HepG2 (cell line): ENCODE measurements at regions of chr1 and their contacts with region 1.

Region 1: GRCh38 chr1:184036517-184036949 is 995 bp downstream of the COLGALT2 start:
- DNase-seq: peak; percentile 42
- ATAC-seq: peak; percentile 85
- H3K4me3 ChIP-seq: peak overlapping the region; percentile 41 to 74 (median 66); a peak in 5 of 6 replicates
- H3K27ac ChIP-seq: no peak overlapping the region
- H3K4me1 ChIP-seq: peaks cover 31% of the 10 kb centered on the region
- H3K27me3 ChIP-seq: peaks cover 1 to 51% of the 10 kb centered on the region in 2 experiments; a peak in 4 of 5 replicates
- CTCF ChIP-seq: no peak
- EP300 ChIP-seq: no peak
- POLR2A ChIP-seq: no peak
- RAD21 ChIP-seq: no peak

Region 2: DNA sequence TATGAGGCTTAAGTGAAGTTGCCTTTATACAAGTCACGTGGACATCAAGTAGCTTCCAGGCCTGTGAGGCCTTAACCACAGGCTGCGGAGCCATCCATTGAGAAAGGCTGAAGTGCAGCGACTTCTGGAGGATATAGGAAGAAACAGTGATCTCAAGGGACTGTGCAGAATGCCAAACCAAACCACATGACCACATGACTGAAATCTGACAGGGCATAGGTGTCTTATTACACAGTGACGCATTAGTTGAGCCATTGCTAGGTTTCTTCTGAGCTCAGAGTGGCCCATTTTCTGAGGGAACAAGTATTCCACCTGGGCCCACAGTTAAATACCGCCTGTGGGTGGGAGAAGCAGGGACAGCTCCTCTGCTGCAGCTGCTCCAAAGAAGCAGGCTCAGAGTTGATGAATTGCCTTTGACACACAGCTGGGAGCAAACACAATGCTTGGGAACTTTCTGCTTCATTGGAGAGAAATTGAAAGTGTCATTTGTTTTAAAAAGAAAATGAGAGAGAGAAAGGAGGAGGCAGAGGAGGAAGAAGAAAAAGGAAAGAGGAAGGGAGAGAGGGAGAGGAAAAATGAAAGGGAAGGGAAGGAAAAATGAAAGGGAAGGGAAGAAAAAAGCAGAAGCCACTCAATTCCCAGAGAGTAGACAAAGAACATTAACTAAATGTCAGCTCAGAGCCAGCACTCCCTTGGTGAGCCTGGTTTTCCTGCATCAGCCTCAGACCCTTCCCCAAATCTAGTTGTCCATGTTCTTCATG is 93.4 kb before region 1 on chr1:
- CTCF ChIA-PET with region 1: no interaction called
- POLR2A ChIA-PET with region 1: no interaction called
- in situ Hi-C with region 1: no loop called
- intact Hi-C with region 1: no loop called
- DNase-seq: no peak
- ATAC-seq: no peak
- H3K4me3 ChIP-seq: no peak overlapping the region
- H3K27ac ChIP-seq: no peak overlapping the region
- H3K4me1 ChIP-seq: peaks cover 15% of the 10 kb centered on the region
- H3K27me3 ChIP-seq: no peaks in the 10 kb centered on the region
- CTCF ChIP-seq: no peak
- EP300 ChIP-seq: no peak
- POLR2A ChIP-seq: no peak
- RAD21 ChIP-seq: no peak

Region 3: GRCh38 chr1:183995322-183996039 is 41.1 kb before region 1 on chr1:
- CTCF ChIA-PET with region 1: no interaction called
- POLR2A ChIA-PET with region 1: interaction called, 3 read pairs
- in situ Hi-C with region 1: no loop called
- intact Hi-C with region 1: loop called (anchors 5 kb)
- DNase-seq: no peak
- ATAC-seq: no peak
- H3K4me3 ChIP-seq: no peak overlapping the region; a peak in 1 of 6 replicates
- H3K27ac ChIP-seq: no peak overlapping the region
- H3K4me1 ChIP-seq: peaks cover 67% of the 10 kb centered on the region
- H3K27me3 ChIP-seq: no peaks in the 10 kb centered on the region
- CTCF ChIP-seq: no peak
- EP300 ChIP-seq: no peak
- POLR2A ChIP-seq: no peak
- RAD21 ChIP-seq: no peak

Region 4: GRCh38 chr1:184101141-184101540 is 64.6 kb after region 1 on chr1:
- CTCF ChIA-PET with region 1: no interaction called
- POLR2A ChIA-PET with region 1: no interaction called
- in situ Hi-C with region 1: no loop called
- intact Hi-C with region 1: no loop called
- DNase-seq: no peak
- ATAC-seq: no peak
- H3K4me3 ChIP-seq: no peak overlapping the region
- H3K27ac ChIP-seq: no peak overlapping the region
- H3K4me1 ChIP-seq: no peaks in the 10 kb centered on the region
- H3K27me3 ChIP-seq: no peaks in the 10 kb centered on the region; a peak in 1 of 5 replicates
- CTCF ChIP-seq: no peak
- EP300 ChIP-seq: no peak
- POLR2A ChIP-seq: no peak
- RAD21 ChIP-seq: no peak

Region 5: GRCh38 chr1:184212649-184213314 is 176.2 kb after region 1 on chr1:
- CTCF ChIA-PET with region 1: no interaction called
- POLR2A ChIA-PET with region 1: no interaction called
- in situ Hi-C with region 1: no loop called
- intact Hi-C with region 1: no loop called
- DNase-seq: no peak
- ATAC-seq: no peak
- H3K4me3 ChIP-seq: no peak overlapping the region
- H3K27ac ChIP-seq: no peak overlapping the region
- H3K4me1 ChIP-seq: no peaks in the 10 kb centered on the region
- H3K27me3 ChIP-seq: peaks cover 0 to 10% of the 10 kb centered on the region in 2 experiments; a peak in 2 of 5 replicates
- CTCF ChIP-seq: no peak
- EP300 ChIP-seq: no peak
- POLR2A ChIP-seq: no peak
- RAD21 ChIP-seq: no peak